Naive thymus-derived CD4-positive, alpha-beta T cell (primary cell): ENCODE measurements at regions of chr2 and their contacts with region 1.

Region 1: DNA sequence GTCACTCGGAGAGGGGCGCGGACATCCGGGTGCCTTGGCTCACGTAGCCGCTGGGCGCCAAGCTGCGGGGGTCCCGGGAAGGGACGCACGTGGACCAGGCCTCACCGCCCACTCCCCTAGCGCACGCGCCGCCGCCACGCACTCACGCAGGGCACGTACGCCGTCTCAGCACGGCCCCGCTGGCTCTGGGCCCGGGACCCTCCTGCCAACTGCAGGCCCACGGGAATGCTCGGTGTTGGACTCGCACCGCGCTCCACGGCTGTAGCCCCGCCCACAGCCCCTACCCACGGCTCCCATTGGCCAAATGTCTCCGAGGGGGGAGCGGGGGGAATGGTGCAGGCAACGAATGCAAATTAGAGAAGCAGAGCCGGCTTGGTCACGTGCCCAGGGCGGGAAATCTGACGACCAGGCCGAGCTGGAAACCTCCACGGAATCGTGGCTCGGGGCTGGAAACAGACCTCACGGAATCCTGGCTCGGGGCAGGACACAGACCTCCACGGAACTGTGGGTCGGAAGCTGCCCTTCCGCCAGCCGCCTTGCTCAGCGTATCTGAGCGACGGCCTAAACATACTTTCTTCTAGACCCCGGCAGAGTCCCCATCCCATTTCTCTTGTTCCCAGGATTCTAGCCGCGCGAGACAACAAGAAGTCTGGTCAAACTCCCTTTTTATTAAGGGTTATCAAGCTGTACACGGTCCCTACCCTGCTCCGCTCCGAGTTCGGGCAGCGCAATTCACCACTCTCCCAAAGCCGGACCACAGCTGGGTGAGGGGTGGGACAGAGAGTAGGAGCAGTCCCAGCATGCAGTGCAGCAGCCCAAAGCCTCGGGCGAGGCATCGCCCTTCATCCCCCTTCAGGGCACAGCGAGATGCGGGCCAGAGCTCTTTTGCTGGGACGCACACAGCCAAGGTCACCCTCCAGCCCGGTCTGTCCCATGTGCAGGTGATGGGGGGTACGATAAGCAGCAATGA is at the start of gene ABCB6:
- DNase-seq: peak; percentile 72 to 90 (median 85)
- ATAC-seq: peak; percentile 92
- H3K4me3 ChIP-seq: peak within 1 kb of the TSS; percentile 60
- H3K4me3 Mint-ChIP-seq: peak within 1 kb of the TSS; percentile 78 to 89 (median 82)
- H3K27ac ChIP-seq: peak within 1 kb of the TSS; percentile 65
- H3K27ac Mint-ChIP-seq: peak within 1 kb of the TSS; percentile 61 to 86 (median 79)
- H3K4me1 ChIP-seq: peaks cover 13 to 14% of the 10 kb centered on the region in 2 donors
- H3K4me1 Mint-ChIP-seq: peaks cover 0 to 29% (median 24%) of the 10 kb centered on the region in 7 donors
- H3K27me3 ChIP-seq: no peaks in the 10 kb centered on the region
- H3K27me3 Mint-ChIP-seq: no peaks in the 10 kb centered on the region
- total RNA-seq, gene ABCB6: 4.1 to 30.2 (median 8.3) TPM

Region 2: GRCh38 chr2:219229305-219230058 is 10.5 kb after region 1 on chr2 and contains the starts of genes ANKZF1 and ATG9A:
- CTCF ChIA-PET with region 1: interaction called, 3 read pairs
- POLR2A ChIA-PET with region 1: interaction called, 33 read pairs
- intact Hi-C with region 1: loop called (anchors 1 kb)
- DNase-seq: peak; percentile 92 to 99 (median 99)
- ATAC-seq: peak; percentile 98
- H3K4me3 ChIP-seq: peak within 1 kb of the TSS; percentile 80
- H3K4me3 Mint-ChIP-seq: peak within 1 kb of the TSS; percentile 94 to 100 (median 98)
- H3K27ac ChIP-seq: peak within 1 kb of the TSS; percentile 90
- H3K27ac Mint-ChIP-seq: peak within 1 kb of the TSS; percentile 96 to 100 (median 96)
- H3K4me1 ChIP-seq: peaks cover 17 to 22% of the 10 kb centered on the region in 2 donors
- H3K4me1 Mint-ChIP-seq: peaks cover 33 to 83% (median 69%) of the 10 kb centered on the region in 7 donors
- H3K27me3 ChIP-seq: no peaks in the 10 kb centered on the region
- H3K27me3 Mint-ChIP-seq: no peaks in the 10 kb centered on the region
- total RNA-seq, gene ANKZF1: 117 to 287 (median 169) TPM
- total RNA-seq, gene ATG9A: 52.6 to 66.0 (median 60.9) TPM

Region 3: GRCh38 chr2:219352448-219353023 is 133.5 kb after region 1 on chr2:
- CTCF ChIA-PET with region 1: no interaction called
- POLR2A ChIA-PET with region 1: no interaction called
- intact Hi-C with region 1: no loop called
- DNase-seq: peak; percentile 25 to 66 (median 58)
- ATAC-seq: peak; percentile 87
- H3K4me3 ChIP-seq: no peak overlapping the region
- H3K4me3 Mint-ChIP-seq: no peak overlapping the region
- H3K27ac ChIP-seq: no peak overlapping the region
- H3K27ac Mint-ChIP-seq: no peak overlapping the region
- H3K4me1 ChIP-seq: no peaks in the 10 kb centered on the region
- H3K4me1 Mint-ChIP-seq: no peaks in the 10 kb centered on the region
- H3K27me3 ChIP-seq: no peaks in the 10 kb centered on the region
- H3K27me3 Mint-ChIP-seq: peaks cover 43 to 64% (median 48%) of the 10 kb centered on the region in 5 donors